ENCODE measurements at regions of chr9 and their contacts with region 1.

Region 1: DNA sequence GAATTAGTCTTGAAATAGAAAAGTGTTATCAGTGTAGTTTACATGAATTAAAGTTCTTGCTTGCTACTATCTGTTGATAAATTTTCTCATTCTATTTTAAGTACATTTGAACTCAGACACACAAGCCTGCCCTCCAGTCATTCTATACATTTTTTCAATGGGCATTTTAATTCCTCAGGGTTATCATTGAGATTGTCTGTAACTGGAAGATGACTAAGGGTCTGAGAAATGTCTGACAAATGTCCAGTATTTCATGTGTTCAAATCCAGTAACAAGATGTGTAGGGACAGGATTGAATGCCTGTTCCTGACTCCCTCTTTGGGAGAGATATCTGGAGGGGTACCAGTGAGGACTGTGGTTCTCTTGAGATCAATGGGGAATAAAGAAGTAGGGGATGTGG is 223.9 kb upstream of the ADAMTSL1 start:
- DNase-seq: no peak
- ATAC-seq: no peak

Region 2: DNA sequence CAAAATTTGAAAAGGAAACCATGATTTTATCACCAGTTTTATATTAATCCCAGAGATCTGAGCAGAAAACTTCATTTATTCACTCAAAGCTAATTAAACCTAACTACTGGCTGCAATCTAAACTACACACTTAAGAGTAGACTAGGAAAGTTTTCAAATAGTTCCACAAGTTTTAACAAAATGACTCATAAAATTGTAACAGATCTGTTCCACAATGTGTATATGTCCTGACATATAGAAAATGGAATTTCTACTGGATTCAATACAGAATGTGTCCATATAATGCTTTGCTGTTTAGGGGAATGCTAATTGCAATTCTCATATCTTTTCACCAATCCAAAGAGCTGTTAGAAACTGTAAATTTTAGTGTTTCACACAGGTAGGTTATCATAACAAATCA is 183.6 kb after region 1 on chr9:
- intact Hi-C with region 1: loop called (anchors 5 kb)
- DNase-seq: no peak
- ATAC-seq: no peak

Measured in sciatic nerve (tissue), 2 donors.